ENCODE measurements at regions of chr1 and their contacts with region 1.

Region 1: DNA sequence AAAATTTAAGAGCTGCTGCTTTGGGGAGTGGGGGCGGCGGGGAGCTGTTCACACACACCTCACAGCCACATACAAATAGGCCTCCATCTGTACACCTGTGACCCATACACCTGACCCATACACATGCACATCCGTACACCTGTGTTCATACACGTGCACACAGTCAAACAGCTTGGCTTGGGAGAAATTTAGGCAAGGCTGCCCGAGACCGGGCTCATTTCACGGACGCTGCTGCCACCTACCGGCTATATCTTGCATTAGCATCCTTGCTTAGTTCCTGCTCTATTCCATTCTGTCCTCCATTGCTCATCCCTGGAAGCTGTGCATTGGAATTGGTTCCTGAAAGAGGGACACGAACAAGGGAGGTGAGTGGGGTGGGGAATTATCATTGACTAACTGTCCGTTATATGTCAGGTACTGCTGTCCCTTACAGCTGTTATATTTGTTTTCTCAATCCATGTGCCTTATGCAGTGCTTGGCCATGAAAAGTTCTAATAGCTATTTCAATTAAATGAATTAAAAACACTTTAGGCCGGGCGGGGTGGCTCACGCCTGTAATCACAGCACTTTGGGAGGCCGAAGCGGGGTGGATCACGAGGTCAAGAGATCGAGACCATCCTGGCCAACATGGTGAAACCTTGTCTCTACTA is 37.1 kb upstream of the EPB41 start:
- DNase-seq: peak; percentile 82
- ATAC-seq: peak; percentile 84
- H3K4me3 Mint-ChIP-seq: no peak overlapping the region
- H3K27ac Mint-ChIP-seq: no peak overlapping the region
- H3K4me1 Mint-ChIP-seq: peaks cover 11% of the 10 kb centered on the region
- H3K27me3 Mint-ChIP-seq: peaks cover 8% of the 10 kb centered on the region

Region 2: DNA sequence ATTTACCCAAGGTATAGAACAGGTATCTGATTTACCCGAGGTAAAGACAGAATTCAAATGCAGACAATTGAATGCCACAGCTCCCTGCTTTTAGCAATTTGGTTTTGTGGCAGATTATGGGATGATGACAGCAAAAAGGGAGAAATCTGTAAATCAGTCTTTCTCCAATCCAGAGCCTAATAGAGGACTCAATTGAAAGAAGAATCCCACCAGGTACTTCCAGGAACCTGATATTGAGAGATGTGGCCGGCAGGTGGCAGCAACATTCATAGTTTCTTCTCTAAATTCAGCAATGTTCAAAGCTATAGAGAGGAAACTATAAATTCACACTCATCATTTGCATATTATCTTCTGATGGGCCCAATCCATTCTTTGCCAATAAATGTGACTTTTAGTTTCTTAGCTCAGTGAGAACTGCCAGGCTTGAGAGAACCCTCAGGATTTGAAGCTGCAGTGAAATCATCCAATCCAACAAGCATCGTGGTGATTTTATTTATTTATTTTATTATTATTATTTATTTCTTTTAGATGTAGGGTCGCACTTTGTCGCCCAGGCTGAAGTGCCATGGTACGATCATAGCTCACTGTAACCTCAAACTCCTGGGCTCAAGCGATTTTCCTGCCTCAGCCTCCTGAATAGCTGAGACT is 517.5 kb before region 1 on chr1:
- CTCF ChIA-PET with region 1: interaction called, 24 read pairs
- DNase-seq: peak; percentile 85
- ATAC-seq: peak; percentile 74
- H3K4me3 Mint-ChIP-seq: no peak overlapping the region
- H3K27ac Mint-ChIP-seq: no peak overlapping the region
- H3K4me1 Mint-ChIP-seq: peaks cover 10% of the 10 kb centered on the region
- H3K27me3 Mint-ChIP-seq: peaks cover 3% of the 10 kb centered on the region

Region 3: DNA sequence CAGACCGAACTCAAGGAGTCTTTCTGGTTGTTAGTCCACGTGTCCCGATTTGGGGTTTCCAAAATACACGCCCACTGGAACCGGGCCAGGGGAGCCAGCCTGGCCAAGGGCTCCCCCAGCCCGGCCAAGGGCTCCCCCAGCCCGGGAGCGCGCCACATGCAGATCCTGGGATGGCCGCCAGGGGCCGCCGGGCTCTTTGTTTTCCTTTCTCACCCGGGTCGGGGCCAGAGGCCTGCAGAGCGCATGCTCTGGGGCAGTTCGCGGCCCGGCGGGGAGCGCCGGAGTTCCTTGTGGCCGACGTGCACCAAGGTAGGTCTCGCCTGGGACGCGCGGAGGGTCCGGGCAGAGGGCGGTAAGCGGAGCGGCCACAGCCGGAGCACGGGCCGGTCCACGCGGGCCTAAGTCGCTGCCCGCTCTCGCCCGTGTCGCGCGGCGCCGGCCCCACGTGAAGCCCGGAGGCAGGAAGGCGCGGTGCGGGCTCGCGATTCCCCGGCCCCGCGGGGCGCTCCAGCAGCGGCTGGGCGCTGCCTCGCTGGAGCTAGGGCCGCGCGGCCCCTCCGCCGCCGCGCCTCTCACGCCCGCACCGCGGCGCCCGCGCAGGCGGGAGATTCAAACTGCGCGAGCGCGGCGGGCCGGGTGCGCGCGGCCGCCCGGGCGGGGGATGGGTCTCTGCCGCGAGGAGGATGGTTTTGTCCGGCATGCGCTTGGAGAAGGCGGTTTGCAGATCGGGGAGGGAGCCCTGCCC is 359.1 kb before region 1 on chr1:
- CTCF ChIA-PET with region 1: interaction called, 11 read pairs
- DNase-seq: peak; percentile 92
- ATAC-seq: peak; percentile 79
- H3K4me3 Mint-ChIP-seq: peak overlapping the region; percentile 81
- H3K27ac Mint-ChIP-seq: peak overlapping the region; percentile 88
- H3K4me1 Mint-ChIP-seq: peaks cover 45% of the 10 kb centered on the region
- H3K27me3 Mint-ChIP-seq: no peaks in the 10 kb centered on the region

Region 4: DNA sequence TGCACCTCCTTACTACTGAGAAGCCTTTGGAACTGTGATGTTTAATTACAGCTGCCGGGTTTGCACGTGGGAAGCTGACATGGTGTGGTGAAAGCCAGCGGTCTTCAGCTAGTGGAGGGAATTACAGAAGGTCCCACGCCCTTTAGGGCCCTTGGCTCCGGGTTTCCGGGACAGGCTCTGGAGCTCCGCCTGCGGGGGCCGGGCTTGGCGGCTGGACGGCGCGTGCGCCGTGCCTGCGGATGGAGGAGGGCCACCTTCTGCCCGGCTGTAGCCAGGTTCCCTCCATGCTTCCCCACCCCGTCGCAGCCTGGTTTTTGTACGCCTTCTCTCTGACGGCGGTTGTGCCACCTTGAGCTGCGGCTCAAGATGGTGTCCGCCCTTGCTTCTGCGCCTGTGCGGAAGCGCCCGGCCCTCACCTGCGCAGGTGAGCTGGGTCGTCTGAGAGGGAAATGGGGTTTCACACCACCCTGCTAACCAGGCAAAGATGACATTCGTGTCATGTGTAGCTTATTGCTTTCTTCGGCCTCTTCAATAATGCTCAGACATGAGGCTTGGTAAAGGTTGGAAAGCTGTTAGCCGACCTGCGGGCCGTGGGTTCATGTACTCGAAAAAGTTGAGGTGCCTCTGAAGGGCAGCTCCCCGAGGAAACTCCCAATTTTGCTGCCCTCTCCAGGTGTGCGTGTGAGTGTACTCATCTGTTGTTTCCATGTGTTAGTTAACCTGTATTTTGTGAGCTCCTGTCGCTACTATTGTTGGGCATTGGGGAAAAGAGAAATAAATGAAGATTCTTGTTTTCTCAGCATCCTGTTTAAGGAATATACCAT is 101.9 kb before region 1 on chr1:
- CTCF ChIA-PET with region 1: interaction called, 34 read pairs
- DNase-seq: peak; percentile 77
- ATAC-seq: peak; percentile 98
- H3K4me3 Mint-ChIP-seq: peak overlapping the region; percentile 71
- H3K27ac Mint-ChIP-seq: peak overlapping the region; percentile 72
- H3K4me1 Mint-ChIP-seq: peaks cover 9% of the 10 kb centered on the region
- H3K27me3 Mint-ChIP-seq: no peaks in the 10 kb centered on the region

Region 5: GRCh38 chr1:28804071-28804470 is 73.2 kb before region 1 on chr1:
- CTCF ChIA-PET with region 1: interaction called, 13 read pairs
- DNase-seq: no peak
- ATAC-seq: no peak
- H3K4me3 Mint-ChIP-seq: no peak overlapping the region
- H3K27ac Mint-ChIP-seq: no peak overlapping the region
- H3K4me1 Mint-ChIP-seq: no peaks in the 10 kb centered on the region
- H3K27me3 Mint-ChIP-seq: peaks cover 10% of the 10 kb centered on the region

Region 6: DNA sequence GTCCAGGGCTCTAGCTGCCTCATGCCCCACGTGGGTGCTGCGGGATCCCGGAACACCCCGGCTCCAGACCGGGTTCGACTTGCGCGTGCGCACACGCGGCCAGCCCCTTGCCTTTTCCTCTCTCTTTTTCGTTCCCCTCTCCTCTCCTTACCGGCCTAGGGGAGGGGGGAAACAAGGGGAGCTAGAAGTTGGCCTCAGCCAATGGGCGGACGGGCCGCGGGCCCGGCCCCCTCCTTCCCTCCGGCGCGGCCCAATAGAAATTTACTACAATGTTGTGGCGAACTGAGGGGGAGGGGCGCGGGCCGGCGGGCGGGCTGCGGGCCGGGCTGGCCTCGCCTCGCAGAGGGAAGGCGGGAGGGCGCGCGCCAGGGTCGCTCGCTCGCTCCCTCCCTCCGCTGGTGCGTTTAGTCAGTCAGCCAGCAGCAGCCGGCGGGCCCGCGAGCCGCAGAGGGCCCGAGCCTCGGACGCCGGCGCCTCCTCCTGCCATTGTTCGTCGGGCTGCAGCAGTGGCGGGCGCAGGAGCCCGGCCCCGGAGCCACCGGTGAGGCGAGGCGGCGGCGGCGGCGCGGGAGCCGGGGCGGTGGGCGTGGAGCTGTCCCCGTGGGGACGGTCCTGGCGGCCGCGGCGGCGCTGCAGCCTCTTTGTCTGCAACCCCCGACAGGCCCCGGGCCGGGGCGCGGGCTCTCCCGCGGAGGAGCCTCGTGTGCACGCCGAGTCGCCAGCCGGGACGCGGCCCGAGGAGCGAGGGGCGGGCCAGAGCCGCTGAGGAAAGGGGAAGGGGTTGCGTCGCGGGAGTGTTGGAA is 37.2 kb after region 1 on chr1 and contains the start of gene EPB41:
- CTCF ChIA-PET with region 1: interaction called, 11 read pairs
- DNase-seq: peak; percentile 92
- ATAC-seq: peak; percentile 91
- H3K4me3 Mint-ChIP-seq: peak within 1 kb of the TSS; percentile 96
- H3K27ac Mint-ChIP-seq: peak within 1 kb of the TSS; percentile 92
- H3K4me1 Mint-ChIP-seq: peaks cover 36% of the 10 kb centered on the region
- H3K27me3 Mint-ChIP-seq: no peaks in the 10 kb centered on the region
- total RNA-seq, gene EPB41: 73.7 to 83.8 TPM

Region 7: GRCh38 chr1:29136391-29136915 is 259.2 kb after region 1 on chr1:
- CTCF ChIA-PET with region 1: no interaction called
- DNase-seq: no peak
- ATAC-seq: no peak
- H3K4me3 Mint-ChIP-seq: no peak overlapping the region
- H3K27ac Mint-ChIP-seq: no peak overlapping the region
- H3K4me1 Mint-ChIP-seq: peaks cover 4% of the 10 kb centered on the region
- H3K27me3 Mint-ChIP-seq: peaks cover 25% of the 10 kb centered on the region

Measured in activated CD8-positive, alpha-beta memory T cell treated with anti-CD3 and anti-CD28 coated beads, Interleukin-2, amount 10 ng/mL, durations not matched to agents 7 days and 5 days (primary cell).